WTC11 (cell line): ENCODE measurements at regions of chr19 and their contacts with region 1.

Region 1: DNA sequence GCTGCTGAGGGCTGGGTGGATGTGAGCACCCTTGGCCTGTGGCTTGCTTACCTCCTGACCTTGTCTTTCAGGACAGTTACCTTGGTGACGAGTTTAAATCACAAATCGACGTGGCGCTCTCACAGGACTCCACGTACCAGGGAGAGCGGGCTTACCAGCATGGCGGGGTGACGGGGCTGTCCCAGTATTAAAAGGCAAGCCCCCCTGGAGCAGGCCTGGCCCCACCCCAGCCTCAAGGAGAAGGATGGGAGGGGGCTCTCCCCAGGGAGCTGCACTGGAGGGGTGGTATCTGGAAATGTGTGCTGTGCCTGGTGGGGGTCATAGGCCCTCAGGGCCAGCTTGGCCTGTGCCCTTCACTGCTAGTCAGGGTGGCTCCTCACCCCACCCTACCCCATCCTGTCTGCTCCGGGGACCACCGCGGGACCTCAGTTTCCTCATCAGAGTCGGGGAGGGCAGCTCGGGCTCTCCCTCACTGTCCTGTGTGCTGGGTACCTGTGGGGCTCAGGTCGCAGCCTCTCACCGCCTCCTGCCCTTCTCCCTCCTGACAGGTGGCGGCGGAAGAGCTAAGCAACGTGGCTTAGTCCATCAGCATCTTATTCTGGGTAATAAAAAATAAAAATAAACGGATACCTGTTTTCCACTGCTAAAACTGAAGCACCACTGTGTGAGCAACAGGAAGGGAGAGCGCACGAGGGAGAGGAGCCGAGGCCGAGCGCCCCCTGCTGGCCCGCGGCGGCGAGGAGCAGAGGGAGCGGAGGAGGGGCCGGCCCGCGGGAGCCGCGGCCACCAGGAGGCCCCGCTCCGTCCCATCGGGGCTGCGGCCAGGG is 29.8 kb downstream of the CERS1 start:
- DNase-seq: peak; percentile 78
- ATAC-seq: peak; percentile 74
- H3K4me3 Mint-ChIP-seq: no peak overlapping the region
- H3K27ac Mint-ChIP-seq: peak overlapping the region; percentile 74; the same call in 1 of the 2 replicates
- H3K4me1 Mint-ChIP-seq: peaks cover 10% of the 10 kb centered on the region; the same call in 1 of the 2 replicates
- H3K27me3 Mint-ChIP-seq: peaks cover 7% of the 10 kb centered on the region
- CTCF ChIP-seq: peak; percentile 96

Region 2: GRCh38 chr19:18649371-18650020 is 216.7 kb before region 1 on chr19:
- CTCF ChIA-PET with region 1: no interaction called
- POLR2A ChIA-PET with region 1: no interaction called
- DNase-seq: no peak
- ATAC-seq: peak; percentile 23; the same call in 1 of the 2 replicates
- H3K4me3 Mint-ChIP-seq: no peak overlapping the region
- H3K27ac Mint-ChIP-seq: peak overlapping the region; percentile 81
- H3K4me1 Mint-ChIP-seq: peaks cover 43% of the 10 kb centered on the region
- H3K27me3 Mint-ChIP-seq: peaks cover 3% of the 10 kb centered on the region; the same call in 1 of the 2 replicates
- CTCF ChIP-seq: no peak

Region 3: GRCh38 chr19:18809150-18809868 is 56.9 kb before region 1 on chr19:
- CTCF ChIA-PET with region 1: no interaction called
- POLR2A ChIA-PET with region 1: no interaction called
- DNase-seq: no peak
- ATAC-seq: no peak
- H3K4me3 Mint-ChIP-seq: no peak overlapping the region
- H3K27ac Mint-ChIP-seq: no peak overlapping the region
- H3K4me1 Mint-ChIP-seq: no peaks in the 10 kb centered on the region
- H3K27me3 Mint-ChIP-seq: peaks cover 53% of the 10 kb centered on the region
- CTCF ChIP-seq: no peak

Region 4: DNA sequence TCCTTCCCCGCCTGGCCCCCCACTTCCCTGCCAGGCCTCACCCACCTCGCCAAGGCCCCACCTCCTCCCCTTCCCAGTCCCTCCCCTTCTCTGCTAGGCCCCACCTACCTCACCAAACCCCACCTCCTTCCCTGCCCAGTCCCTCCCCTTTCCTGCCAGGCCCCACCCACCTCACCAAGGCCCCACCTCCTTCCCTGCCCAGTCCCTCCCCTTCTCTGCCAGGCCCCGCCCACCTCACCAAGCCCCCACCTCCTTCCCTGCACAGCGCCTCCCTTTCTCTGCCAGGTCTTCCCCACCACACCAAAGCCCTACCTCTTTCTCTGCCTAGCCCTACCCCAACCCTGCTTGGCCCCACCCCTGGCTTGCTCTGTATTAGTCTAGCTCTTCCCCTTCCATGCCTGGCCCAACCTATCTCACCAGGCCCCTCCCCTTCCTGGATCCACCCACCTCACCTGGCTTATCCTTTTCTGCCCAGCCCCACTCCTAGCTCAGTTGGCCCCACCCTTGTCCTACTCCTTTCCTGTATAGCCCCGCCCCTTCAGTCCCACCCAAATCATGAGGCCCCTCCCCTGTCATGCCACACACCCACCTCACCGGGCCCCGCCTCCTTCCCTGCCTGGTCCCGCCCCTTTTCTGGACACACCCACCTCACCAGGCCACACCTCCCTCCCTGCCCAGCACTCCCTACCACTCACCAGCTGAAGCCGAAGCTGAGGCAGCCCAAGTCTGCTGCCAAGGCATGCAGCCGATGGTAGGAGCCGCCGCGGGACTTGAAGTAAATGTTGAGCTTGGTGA is 13.6 kb after region 1 on chr19:
- CTCF ChIA-PET with region 1: interaction called, 14 read pairs
- POLR2A ChIA-PET with region 1: no interaction called
- DNase-seq: peak; percentile 85
- ATAC-seq: peak; percentile 81
- H3K4me3 Mint-ChIP-seq: no peak overlapping the region
- H3K27ac Mint-ChIP-seq: no peak overlapping the region
- H3K4me1 Mint-ChIP-seq: no peaks in the 10 kb centered on the region
- H3K27me3 Mint-ChIP-seq: no peaks in the 10 kb centered on the region
- CTCF ChIP-seq: no peak